Posterior vena cava (tissue), 2 donors: ENCODE measurements at regions of chr12 and their contacts with region 1.

Region 1: DNA sequence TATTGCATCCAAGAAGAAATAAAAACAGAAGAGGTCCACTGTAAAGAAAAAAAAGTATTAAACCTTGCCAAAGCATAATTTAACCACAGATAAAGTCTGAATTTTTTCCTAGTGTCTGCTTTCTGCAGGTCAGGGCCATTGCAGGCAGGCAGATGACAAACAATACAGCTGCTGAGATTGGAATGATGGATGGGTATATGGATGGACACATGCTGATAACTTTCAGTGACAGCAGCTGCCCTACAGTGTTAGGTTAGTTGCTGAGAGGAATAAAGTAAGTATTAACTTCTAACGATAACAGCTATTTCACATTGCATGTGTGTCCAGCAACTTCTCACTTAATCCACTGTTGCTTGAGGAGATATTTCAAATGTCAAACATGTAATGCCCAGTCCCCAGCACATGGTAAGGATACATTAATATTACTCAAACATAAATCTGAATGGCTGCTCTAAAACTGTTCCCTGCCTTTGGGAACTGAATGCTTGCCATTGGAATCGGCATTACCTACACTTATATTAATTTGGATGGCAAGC is 515.3 kb downstream of the RMST start:
- DNase-seq: no peak

Region 2: DNA sequence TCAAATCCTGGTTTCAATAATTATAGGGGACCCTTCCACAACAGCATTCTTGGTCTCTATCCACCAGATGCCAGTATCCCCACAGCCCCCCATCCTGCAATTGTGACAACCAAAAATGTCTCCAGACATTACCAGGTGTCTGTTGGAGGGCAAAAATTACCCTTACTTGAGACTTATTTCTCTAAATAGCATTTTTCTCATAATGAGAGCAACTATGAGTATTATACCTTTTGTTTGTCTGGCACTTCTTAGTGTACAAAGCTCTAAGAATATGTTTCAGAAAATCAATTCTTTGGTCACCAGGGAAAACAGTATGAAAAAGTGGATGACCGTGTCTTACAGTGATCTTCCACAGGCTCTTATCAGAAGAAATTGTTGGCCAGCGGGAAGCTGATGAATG is 542.8 kb before region 1 on chr12:
- intact Hi-C with region 1: loop called in 1 of 2 experiments (anchors 10 kb)
- DNase-seq: no peak

Region 3: GRCh38 chr12:97995559-97995958 is 17.6 kb after region 1 on chr12:
- intact Hi-C with region 1: no loop called
- DNase-seq: no peak